PC-3 (cell line): ENCODE measurements at regions of chrX and their contacts with region 1.

Region 1: DNA sequence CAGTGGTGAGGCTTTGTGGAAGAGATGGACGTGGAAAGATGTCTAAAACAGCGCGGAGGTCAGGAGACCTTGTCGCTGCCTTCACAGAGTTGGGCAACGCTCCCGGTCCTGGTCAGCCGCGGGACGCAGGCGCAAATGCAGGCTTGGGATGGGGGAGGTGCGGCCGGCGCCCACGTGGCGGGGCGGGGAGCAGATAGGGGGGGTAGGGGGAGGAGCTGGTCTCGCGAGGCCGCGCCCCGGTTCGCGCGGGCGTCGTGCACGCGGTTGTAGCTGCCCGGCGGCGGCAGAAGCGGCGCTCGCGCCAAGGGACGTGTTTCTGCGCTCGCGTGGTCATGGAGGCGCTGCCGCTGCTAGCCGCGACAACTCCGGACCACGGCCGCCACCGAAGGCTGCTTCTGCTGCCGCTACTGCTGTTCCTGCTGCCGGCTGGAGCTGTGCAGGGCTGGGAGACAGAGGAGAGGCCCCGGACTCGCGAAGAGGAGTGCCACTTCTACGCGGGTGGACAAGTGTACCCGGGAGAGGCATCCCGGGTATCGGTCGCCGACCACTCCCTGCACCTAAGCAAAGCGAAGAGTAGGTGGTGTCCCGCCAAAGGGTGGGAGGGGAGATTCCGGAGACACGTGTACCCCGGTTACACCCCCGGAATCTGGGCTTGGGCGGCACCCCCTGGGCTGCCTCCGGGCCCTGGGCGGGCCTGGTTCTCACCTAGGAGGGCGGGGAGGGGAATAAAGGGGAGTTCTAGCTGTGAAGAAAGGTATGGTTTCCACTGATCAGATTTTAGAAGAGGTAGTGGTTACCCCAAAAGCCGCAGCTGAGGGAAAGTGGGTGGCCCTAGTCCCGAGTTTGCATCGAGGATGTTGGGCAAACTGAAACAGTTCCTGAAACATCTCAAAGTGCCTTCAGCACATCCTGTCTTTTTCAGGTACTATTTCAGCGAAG is at the start of gene PRDX4:
- DNase-seq: peak; percentile 87
- ATAC-seq: peak; percentile 82
- H3K4me3 ChIP-seq: peak within 1 kb of the TSS; percentile 71
- H3K27ac ChIP-seq: peak within 1 kb of the TSS; percentile 80
- H3K4me1 ChIP-seq: peaks cover 13% of the 10 kb centered on the region
- H3K27me3 ChIP-seq: no peaks in the 10 kb centered on the region
- CTCF ChIP-seq: no peak
- total RNA-seq, gene PRDX4: 249 and 276 TPM in 2 replicates

Region 2: DNA sequence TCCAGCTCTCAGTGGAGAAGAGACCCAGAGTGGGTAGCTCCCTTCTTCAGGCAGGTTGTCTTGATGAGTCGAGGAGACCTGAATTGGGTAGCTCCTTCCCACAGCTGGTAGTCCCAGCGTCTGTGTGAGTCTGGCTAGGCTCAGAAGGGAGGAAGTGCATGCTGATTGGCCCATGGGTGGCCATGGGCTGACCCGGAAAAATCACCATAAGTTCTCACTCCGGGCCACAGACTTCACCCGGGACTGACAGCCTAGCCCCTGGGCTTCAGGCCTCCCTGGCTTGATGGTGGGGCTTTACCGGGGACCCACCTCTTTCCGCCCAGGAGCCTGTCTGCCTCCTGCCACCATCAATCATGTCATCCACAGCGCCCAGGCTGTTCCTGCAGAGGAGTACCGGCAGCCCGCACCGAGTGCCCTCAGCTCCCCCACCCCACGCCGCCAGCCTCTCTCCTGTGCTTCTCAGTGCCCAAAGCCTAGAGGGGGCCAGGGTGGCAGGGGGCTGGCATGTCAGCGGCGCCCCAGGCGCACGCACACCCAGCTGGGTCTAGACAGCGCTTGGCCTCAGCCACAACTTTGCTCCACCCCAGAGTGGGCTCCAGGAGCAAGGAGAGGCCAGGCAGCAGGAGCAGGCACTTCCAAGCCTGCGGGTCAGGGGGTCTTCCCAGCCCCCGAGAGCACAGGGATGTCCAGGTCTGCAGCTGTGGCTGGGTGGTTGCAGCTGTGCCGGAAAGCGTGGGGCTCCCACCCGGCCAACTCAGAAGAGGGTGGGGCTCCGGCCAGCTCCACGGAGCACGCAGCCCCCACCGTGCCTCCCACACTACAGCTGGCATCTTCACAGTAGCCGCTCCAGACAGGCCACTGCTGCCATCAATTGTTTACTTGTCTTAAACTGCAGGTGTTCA is 99.4 kb after region 1 on chrX:
- CTCF ChIA-PET with region 1: no interaction called
- POLR2A ChIA-PET with region 1: no interaction called
- intact Hi-C with region 1: no loop called
- DNase-seq: no peak
- ATAC-seq: no peak
- H3K4me3 ChIP-seq: no peak overlapping the region
- H3K27ac ChIP-seq: no peak overlapping the region
- H3K4me1 ChIP-seq: no peaks in the 10 kb centered on the region
- H3K27me3 ChIP-seq: no peaks in the 10 kb centered on the region
- CTCF ChIP-seq: no peak

Region 3: GRCh38 chrX:24693453-24694202 is 1026.1 kb after region 1 on chrX and contains the start of gene POLA1:
- CTCF ChIA-PET with region 1: no interaction called
- POLR2A ChIA-PET with region 1: no interaction called
- intact Hi-C with region 1: loop called (anchors 10 kb)
- DNase-seq: peak; percentile 95
- ATAC-seq: peak; percentile 95
- H3K4me3 ChIP-seq: peak within 1 kb of the TSS; percentile 90
- H3K27ac ChIP-seq: peak within 1 kb of the TSS; percentile 34; the same call in 1 of the 2 replicates
- H3K4me1 ChIP-seq: peaks cover 12% of the 10 kb centered on the region
- H3K27me3 ChIP-seq: no peaks in the 10 kb centered on the region
- CTCF ChIP-seq: peak; percentile 46; the same call in 1 of the 2 replicates
- total RNA-seq, gene POLA1: 19.6 and 23.2 TPM in 2 replicates